Naive thymus-derived CD4-positive, alpha-beta T cell (primary cell): ENCODE measurements at regions of chr9 and their contacts with region 1.

Region 1: GRCh38 chr9:137240861-137241489 is at the start of gene TUBB4B:
- DNase-seq: peak; percentile 87 to 99 (median 98)
- ATAC-seq: peak; percentile 87
- H3K4me3 ChIP-seq: peak within 1 kb of the TSS; percentile 72
- H3K4me3 Mint-ChIP-seq: peak within 1 kb of the TSS; percentile 83 to 97 (median 92)
- H3K27ac ChIP-seq: peak within 1 kb of the TSS; percentile 83
- H3K27ac Mint-ChIP-seq: peak within 1 kb of the TSS; percentile 82 to 94 (median 93)
- H3K4me1 ChIP-seq: peaks cover 15 to 23% of the 10 kb centered on the region in 2 donors
- H3K4me1 Mint-ChIP-seq: peaks cover 12 to 35% (median 21%) of the 10 kb centered on the region in 7 donors
- H3K27me3 ChIP-seq: no peaks in the 10 kb centered on the region
- H3K27me3 Mint-ChIP-seq: peaks cover 0 to 4% (median 0%) of the 10 kb centered on the region in 5 donors
- total RNA-seq, gene TUBB4B: 44.2 to 260 (median 87.5) TPM

Region 2: DNA sequence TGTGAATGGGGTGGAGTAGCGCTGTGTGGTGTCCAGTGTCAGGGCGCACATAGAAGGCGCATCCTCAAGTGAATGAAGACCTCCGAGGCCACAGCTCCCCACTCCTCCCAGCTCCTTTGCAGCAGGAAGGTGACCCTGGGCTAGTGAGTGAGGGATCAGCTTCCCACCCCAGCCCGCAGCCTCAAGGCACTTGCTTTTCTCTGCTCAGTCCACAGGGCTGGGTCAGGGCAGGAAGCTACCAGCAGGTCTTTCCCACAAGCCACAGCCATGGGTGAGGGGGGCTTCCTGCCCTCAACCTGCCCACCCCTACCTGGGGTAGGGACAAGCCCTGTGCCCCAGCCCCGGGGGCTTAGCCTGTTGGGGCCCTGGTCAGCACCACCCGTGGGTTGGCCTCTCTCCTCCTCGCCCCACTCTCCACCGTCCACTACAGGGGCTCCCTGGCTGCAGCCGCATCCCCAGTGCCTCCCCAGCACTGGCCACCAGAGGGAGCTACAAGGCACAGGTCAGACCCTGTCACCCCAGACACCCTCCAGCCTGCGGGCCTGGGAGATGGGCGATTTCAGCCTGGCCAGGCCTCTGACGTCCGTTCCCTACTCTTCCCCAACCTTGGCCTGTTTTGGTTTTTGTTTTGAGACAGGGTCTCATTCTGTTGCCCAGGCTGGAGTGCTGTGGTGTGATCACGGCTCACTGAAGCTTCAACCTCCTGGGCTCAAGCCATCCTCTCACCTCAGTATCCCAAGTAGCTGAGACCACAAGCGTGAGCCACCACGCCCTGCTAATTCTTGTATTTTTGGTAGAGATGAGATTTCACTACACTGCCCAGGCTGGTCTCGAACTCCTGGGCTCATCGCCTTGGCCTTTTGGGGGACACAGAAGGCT is 211.7 kb before region 1 on chr9:
- CTCF ChIA-PET with region 1: no interaction called
- POLR2A ChIA-PET with region 1: no interaction called
- intact Hi-C with region 1: loop called in 1 of 2 experiments (anchors 1 kb)
- DNase-seq: peak; percentile 29 to 84 (median 52)
- ATAC-seq: peak; percentile 66
- H3K4me3 ChIP-seq: peak overlapping the region; percentile 69
- H3K4me3 Mint-ChIP-seq: peak overlapping the region; percentile 71 to 85 (median 79)
- H3K27ac ChIP-seq: peak overlapping the region; percentile 51
- H3K27ac Mint-ChIP-seq: peak overlapping the region in 2 of 9 donors; percentile 28 to 52
- H3K4me1 ChIP-seq: peaks cover 50 to 56% of the 10 kb centered on the region in 2 donors
- H3K4me1 Mint-ChIP-seq: peaks cover 13 to 40% (median 32%) of the 10 kb centered on the region in 7 donors
- H3K27me3 ChIP-seq: no peaks in the 10 kb centered on the region
- H3K27me3 Mint-ChIP-seq: peaks cover 0 to 11% (median 0%) of the 10 kb centered on the region in 5 donors

Region 3: DNA sequence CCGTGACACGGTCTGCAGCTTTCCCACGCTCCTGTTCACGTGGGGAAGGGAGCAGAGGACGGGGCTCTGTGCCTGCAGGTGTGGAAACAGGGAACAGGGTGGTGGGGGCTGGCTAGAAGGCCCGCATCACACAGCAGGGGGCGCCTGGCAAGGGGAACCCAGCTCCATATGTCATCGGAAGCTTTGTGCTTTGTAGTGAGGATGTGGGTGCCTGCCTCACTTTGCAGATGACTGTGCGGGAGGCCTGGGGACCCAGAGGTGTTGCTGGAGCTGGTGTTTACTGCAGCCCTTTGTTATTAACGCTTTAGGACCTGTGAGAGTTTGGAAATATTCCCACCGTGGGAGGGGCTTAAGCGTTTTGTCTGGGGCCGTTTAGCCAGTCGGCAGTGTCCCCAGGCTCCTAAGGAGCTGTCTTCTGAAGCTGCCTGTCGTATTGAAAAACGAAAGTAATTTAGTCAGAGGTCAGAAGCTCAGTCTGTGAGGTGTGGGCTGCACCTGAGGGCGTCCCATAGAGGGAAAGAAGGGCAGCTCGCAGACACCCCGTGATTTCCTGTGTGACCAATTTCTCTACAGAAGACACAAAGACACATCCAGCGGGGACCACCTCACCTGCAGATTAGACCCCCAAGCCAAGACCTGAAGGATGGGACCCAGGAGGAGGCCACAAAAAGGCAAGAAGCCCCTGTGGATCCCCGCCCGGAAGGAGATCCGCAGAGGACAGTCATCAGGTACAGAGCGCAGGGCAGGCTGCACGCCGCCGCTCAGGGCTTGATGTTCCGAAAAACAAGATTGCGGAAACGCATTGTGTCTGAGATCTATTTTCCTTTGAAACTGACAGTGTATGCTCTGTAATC is 145.1 kb before region 1 on chr9:
- CTCF ChIA-PET with region 1: interaction called, 10 read pairs
- POLR2A ChIA-PET with region 1: interaction called, 22 read pairs
- intact Hi-C with region 1: loop called in 1 of 2 experiments (anchors 1 kb)
- DNase-seq: peak; percentile 63 to 92 (median 89)
- ATAC-seq: peak; percentile 100
- H3K4me3 ChIP-seq: peak overlapping the region; percentile 63
- H3K4me3 Mint-ChIP-seq: peak overlapping the region; percentile 76 to 94 (median 86)
- H3K27ac ChIP-seq: peak overlapping the region; percentile 79
- H3K27ac Mint-ChIP-seq: peak overlapping the region; percentile 87 to 98 (median 95)
- H3K4me1 ChIP-seq: peaks cover 12 to 14% of the 10 kb centered on the region in 2 donors
- H3K4me1 Mint-ChIP-seq: peaks cover 9 to 28% (median 21%) of the 10 kb centered on the region in 7 donors
- H3K27me3 ChIP-seq: no peaks in the 10 kb centered on the region
- H3K27me3 Mint-ChIP-seq: no peaks in the 10 kb centered on the region

Region 4: GRCh38 chr9:137188490-137189296 is 52.3 kb before region 1 on chr9 and contains the starts of genes ANAPC2 and SSNA1:
- CTCF ChIA-PET with region 1: no interaction called
- POLR2A ChIA-PET with region 1: interaction called, 21 read pairs
- intact Hi-C with region 1: loop called (anchors 1 to 2 kb)
- DNase-seq: peak; percentile 86 to 99 (median 93)
- ATAC-seq: peak; percentile 91
- H3K4me3 ChIP-seq: peak within 1 kb of the TSS; percentile 98
- H3K4me3 Mint-ChIP-seq: peak within 1 kb of the TSS; percentile 91 to 99 (median 92)
- H3K27ac ChIP-seq: peak within 1 kb of the TSS; percentile 99
- H3K27ac Mint-ChIP-seq: peak within 1 kb of the TSS; percentile 85 to 96 (median 93)
- H3K4me1 ChIP-seq: peaks cover 30 to 32% of the 10 kb centered on the region in 2 donors
- H3K4me1 Mint-ChIP-seq: peaks cover 14 to 61% (median 32%) of the 10 kb centered on the region in 7 donors
- H3K27me3 ChIP-seq: no peaks in the 10 kb centered on the region
- H3K27me3 Mint-ChIP-seq: no peaks in the 10 kb centered on the region
- total RNA-seq, gene ANAPC2: 77.3 to 147 (median 134) TPM
- total RNA-seq, gene SSNA1: 37.9 to 75.6 (median 46.8) TPM

Region 5: GRCh38 chr9:137254624-137255447 is 13.9 kb after region 1 on chr9 and contains the start of gene NELFB:
- CTCF ChIA-PET with region 1: interaction called, 9 read pairs
- POLR2A ChIA-PET with region 1: interaction called, 168 read pairs
- intact Hi-C with region 1: loop called (anchors 1 kb)
- DNase-seq: peak; percentile 89 to 100 (median 95)
- ATAC-seq: peak; percentile 97
- H3K4me3 ChIP-seq: peak within 1 kb of the TSS; percentile 91
- H3K4me3 Mint-ChIP-seq: peak within 1 kb of the TSS; percentile 79 to 94 (median 88)
- H3K27ac ChIP-seq: peak within 1 kb of the TSS; percentile 70
- H3K27ac Mint-ChIP-seq: peak within 1 kb of the TSS in 7 of 9 donors; percentile 65 to 91 (median 82)
- H3K4me1 ChIP-seq: peaks cover 11% of the 10 kb centered on the region in 2 donors
- H3K4me1 Mint-ChIP-seq: peaks cover 0 to 22% (median 17%) of the 10 kb centered on the region in 7 donors
- H3K27me3 ChIP-seq: no peaks in the 10 kb centered on the region
- H3K27me3 Mint-ChIP-seq: no peaks in the 10 kb centered on the region
- total RNA-seq, gene NELFB: 33.4 to 64.2 (median 38.9) TPM

Region 6: DNA sequence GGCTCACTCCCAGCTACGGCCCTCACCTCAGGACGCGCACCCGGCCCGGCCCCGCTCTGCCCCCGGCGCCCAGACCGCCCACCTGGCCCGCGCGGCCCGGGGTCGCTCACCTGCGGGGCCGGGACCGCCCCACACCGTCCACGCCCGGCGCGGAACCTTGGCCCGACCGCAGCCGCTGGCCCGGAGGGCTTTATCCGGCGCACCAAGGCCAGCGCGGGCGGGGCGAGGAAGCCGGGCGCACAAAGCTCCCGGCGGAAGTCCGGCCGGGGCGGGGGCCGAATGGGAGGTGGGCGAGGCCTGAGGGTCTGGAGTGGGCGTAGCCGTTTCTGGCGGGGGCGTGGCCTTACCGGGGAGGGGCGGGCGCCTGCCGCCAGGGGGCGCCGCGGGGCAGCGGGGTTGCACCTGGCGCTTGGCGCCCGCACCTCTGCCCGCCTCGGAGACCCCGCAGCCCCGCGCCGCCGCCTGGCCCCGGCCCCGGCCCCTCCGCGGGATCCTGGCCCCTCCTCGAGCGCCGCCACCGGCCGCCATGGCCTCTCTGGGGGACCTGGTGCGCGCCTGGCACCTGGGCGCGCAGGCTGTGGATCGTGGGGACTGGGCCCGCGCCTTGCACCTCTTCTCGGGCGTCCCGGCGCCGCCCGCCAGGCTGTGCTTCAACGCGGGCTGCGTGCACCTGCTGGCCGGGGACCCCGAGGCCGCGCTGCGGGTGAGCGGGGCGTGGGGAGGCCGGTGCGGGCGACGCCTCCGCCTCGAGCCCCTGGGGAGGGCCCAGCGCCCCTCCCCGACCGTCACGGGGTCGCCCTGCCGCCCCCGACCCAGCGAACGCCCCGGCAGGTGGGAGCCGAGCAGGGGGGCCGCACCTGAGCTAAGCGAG is 182.3 kb after region 1 on chr9 and contains the starts of genes EXD3 and NOXA1:
- CTCF ChIA-PET with region 1: no interaction called
- POLR2A ChIA-PET with region 1: interaction called, 5 read pairs
- intact Hi-C with region 1: loop called in 1 of 2 experiments (anchors 1 kb)
- DNase-seq: peak; percentile 84 to 99 (median 91)
- ATAC-seq: peak; percentile 97
- H3K4me3 ChIP-seq: peak within 1 kb of the TSS; percentile 65
- H3K4me3 Mint-ChIP-seq: peak within 1 kb of the TSS; percentile 76 to 90 (median 82)
- H3K27ac ChIP-seq: peak within 1 kb of the TSS; percentile 62
- H3K27ac Mint-ChIP-seq: peak within 1 kb of the TSS; percentile 28 to 91 (median 66)
- H3K4me1 ChIP-seq: peaks cover 0 to 5% of the 10 kb centered on the region in 2 donors
- H3K4me1 Mint-ChIP-seq: peaks cover 2 to 21% (median 13%) of the 10 kb centered on the region in 7 donors
- H3K27me3 ChIP-seq: no peaks in the 10 kb centered on the region
- H3K27me3 Mint-ChIP-seq: peaks cover 0 to 9% (median 0%) of the 10 kb centered on the region in 5 donors
- total RNA-seq, gene EXD3: 11.7 to 27.2 (median 24.7) TPM
- total RNA-seq, gene NOXA1: 0.94 to 11.1 (median 6.0) TPM

Region 7: GRCh38 chr9:137605121-137606004 is 364.4 kb after region 1 on chr9 and contains the start of gene ARRDC1:
- CTCF ChIA-PET with region 1: no interaction called
- POLR2A ChIA-PET with region 1: no interaction called
- intact Hi-C with region 1: loop called in 1 of 2 experiments (anchors 2 kb)
- DNase-seq: peak; percentile 77 to 95 (median 88)
- ATAC-seq: peak; percentile 91
- H3K4me3 ChIP-seq: peak within 1 kb of the TSS; percentile 69
- H3K4me3 Mint-ChIP-seq: peak within 1 kb of the TSS; percentile 66 to 92 (median 84)
- H3K27ac ChIP-seq: peak within 1 kb of the TSS; percentile 85
- H3K27ac Mint-ChIP-seq: peak within 1 kb of the TSS in 5 of 9 donors; percentile 39 to 82 (median 52)
- H3K4me1 ChIP-seq: peaks cover 6 to 10% of the 10 kb centered on the region in 2 donors
- H3K4me1 Mint-ChIP-seq: peaks cover 0 to 39% (median 24%) of the 10 kb centered on the region in 7 donors
- H3K27me3 ChIP-seq: no peaks in the 10 kb centered on the region
- H3K27me3 Mint-ChIP-seq: no peaks in the 10 kb centered on the region
- total RNA-seq, gene ARRDC1: 53.7 to 126 (median 82.6) TPM

Region 8: DNA sequence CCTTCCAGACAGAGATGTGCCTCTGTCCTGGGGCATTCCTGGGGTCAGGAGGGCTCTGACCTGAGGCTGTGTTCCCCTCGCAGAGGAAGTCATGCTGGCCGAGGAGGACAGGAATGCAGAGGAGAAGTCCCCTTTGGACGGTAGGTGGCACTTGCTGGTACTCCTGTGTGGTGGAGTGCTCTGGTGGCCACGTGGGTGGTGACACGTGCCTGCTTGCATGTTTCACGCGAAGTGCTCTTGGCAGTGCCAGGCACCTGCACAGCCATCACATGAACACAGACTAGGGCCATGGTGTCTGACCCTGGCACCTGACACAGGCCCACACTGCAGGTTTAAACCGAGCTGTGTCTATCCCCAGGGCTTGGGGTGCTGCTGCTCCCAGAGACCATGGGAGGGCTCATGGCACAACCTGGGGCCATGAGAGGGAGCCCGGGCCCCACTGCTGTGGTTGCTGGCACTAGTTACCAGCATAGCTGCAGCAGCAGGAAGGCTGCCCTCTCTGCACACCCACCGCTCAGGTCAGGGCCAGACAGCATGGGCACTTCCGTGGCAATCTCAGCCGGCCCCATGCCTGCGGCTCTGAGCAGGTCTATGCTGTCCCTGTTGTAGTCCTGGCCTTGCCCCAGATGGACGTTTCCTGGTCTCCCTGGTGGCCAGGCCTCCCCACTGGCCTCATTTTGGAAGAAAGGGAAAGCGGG is 715.9 kb after region 1 on chr9:
- CTCF ChIA-PET with region 1: no interaction called
- POLR2A ChIA-PET with region 1: no interaction called
- intact Hi-C with region 1: no loop called
- DNase-seq: no peak
- ATAC-seq: no peak
- H3K4me3 ChIP-seq: no peak overlapping the region
- H3K4me3 Mint-ChIP-seq: no peak overlapping the region
- H3K27ac ChIP-seq: no peak overlapping the region
- H3K27ac Mint-ChIP-seq: no peak overlapping the region
- H3K4me1 ChIP-seq: no peaks in the 10 kb centered on the region
- H3K4me1 Mint-ChIP-seq: peaks cover 0 to 1% (median 0%) of the 10 kb centered on the region in 7 donors
- H3K27me3 ChIP-seq: no peaks in the 10 kb centered on the region
- H3K27me3 Mint-ChIP-seq: peaks cover 0 to 7% (median 0%) of the 10 kb centered on the region in 5 donors